A673 (cell line): ENCODE measurements at regions of chr1 and their contacts with region 1.

Region 1: GRCh38 chr1:147172168-147172992 is at the start of gene PRKAB2:
- DNase-seq: peak; percentile 97
- H3K4me3 ChIP-seq: peak within 1 kb of the TSS; percentile 70
- H3K27ac ChIP-seq: peak within 1 kb of the TSS; percentile 64
- H3K4me1 ChIP-seq: peaks cover 17% of the 10 kb centered on the region
- H3K27me3 ChIP-seq: no peaks in the 10 kb centered on the region
- CTCF ChIP-seq: peak; percentile 82
- total RNA-seq, gene PRKAB2: 14.4 and 15.0 TPM in 2 replicates

Region 2: DNA sequence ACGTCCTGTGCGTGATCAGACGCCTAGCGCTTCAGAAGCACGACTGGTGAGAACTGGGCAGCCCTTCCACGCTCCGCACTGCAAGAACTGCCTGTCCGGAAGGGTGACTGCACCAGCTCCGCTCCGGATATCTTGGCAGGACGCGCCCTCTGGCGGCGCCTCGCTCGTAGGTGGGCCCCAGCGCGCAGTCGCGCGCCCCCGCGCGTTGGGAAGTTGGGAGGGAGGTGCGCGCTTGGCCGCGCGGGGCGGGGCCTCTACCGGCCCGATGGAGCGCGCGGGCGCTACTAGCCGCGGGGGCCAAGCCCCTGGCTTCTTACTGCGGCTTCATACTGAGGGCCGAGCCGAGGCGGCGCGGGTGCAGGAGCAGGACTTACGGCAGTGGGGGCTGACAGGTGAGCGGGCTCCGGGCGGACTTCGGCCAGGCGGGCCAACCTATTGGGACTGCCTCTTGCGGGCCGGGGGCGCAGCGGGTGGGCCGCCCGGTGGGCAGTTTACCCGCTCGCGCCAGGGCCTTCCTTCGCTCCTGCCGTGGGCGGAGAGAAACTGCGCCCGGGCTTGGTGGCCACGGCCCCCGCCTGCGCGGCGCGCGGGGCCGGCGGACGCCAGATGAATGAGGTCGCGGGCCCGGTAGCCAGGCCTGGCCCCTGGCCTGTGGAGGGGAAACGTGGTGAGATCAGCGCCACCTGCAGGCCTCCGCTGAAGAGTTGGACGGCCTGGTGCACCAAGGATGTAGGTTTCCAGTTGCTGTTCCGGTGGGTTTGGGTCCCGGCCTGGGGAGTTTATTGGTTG is 70.3 kb after region 1 on chr1 and contains the start of gene CHD1L:
- CTCF ChIA-PET with region 1: interaction called, 3 read pairs
- POLR2A ChIA-PET with region 1: no interaction called
- intact Hi-C with region 1: loop called (anchors 1 kb)
- DNase-seq: peak; percentile 96
- H3K4me3 ChIP-seq: peak within 1 kb of the TSS; percentile 91
- H3K27ac ChIP-seq: peak within 1 kb of the TSS; percentile 90
- H3K4me1 ChIP-seq: peaks cover 13% of the 10 kb centered on the region
- H3K27me3 ChIP-seq: no peaks in the 10 kb centered on the region
- CTCF ChIP-seq: peak; percentile 86
- total RNA-seq, gene CHD1L: 62.1 and 64.5 TPM in 2 replicates

Region 3: GRCh38 chr1:147260956-147261355 is 88.6 kb after region 1 on chr1:
- CTCF ChIA-PET with region 1: no interaction called
- POLR2A ChIA-PET with region 1: no interaction called
- intact Hi-C with region 1: no loop called
- DNase-seq: no peak
- H3K4me3 ChIP-seq: no peak overlapping the region
- H3K27ac ChIP-seq: no peak overlapping the region
- H3K4me1 ChIP-seq: no peaks in the 10 kb centered on the region
- H3K27me3 ChIP-seq: no peaks in the 10 kb centered on the region
- CTCF ChIP-seq: no peak